GM12878 (cell line): ENCODE measurements at regions of chr13 and their contacts with region 1.

Region 1: DNA sequence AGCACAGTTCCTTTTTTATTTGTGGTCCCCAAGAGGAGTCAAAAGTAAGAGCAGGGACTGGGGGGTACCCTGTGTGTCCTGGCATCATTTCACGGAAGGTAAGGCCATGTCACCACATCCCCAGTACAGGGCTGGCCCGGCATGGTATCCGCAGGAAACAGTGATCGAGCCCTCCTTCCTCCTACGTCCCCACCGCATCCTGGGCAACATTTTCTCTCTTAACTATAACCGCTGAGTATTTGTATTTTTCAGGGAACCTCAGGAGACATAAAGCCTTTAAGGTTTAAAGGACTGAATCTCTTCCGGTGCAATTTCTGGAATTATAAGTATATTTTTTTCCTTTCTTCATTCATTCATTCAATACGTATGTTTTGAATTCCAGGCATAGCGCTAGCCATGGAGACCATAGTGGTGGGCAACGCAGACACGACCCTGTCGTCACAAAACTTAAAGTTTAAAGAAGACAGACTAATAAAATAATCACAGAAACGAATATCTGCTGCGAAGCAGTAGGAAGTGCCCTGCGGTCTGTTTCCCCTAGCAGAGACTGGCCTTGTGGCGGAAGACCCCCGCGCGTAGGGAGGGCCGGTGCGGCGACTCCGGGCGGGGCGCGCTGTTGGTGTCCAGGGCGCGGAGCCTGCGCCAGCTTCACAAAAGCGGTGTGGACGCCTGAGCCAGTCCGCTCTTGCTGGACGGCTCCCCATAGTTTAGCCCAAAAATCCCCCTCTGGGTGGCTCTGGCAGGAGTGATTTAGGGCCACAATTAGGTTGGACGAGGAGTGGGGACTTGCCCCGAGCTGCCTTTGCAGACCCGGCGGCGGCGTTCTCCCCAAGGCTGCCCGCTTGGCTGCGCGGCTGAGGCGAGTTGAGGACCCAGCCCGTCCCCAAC is 13.9 kb upstream of the LATS2 start:
- DNase-seq: no peak
- ATAC-seq: peak; percentile 83
- H3K4me3 ChIP-seq: peak overlapping the region; percentile 44; the same call in 1 of the 2 replicates
- H3K27ac ChIP-seq: no peak overlapping the region
- H3K4me1 ChIP-seq: peaks cover 6% of the 10 kb centered on the region
- H3K27me3 ChIP-seq: no peaks in the 10 kb centered on the region; a peak in 1 of 4 replicates
- CTCF ChIP-seq: no peak
- EP300 ChIP-seq: no peak
- POLR2A ChIP-seq: no peak
- RAD21 ChIP-seq: no peak

Region 2: GRCh38 chr13:20945952-20946383 is 129.3 kb before region 1 on chr13:
- CTCF ChIA-PET with region 1: no interaction called
- POLR2A ChIA-PET with region 1: no interaction called
- RAD21 ChIA-PET with region 1: no interaction called
- SMC1A ChIA-PET with region 1: no interaction called
- in situ Hi-C with region 1: no loop called
- intact Hi-C with region 1: loop called (anchors 10 kb)
- DNase-seq: no peak
- ATAC-seq: peak; percentile 45
- H3K4me3 ChIP-seq: no peak overlapping the region
- H3K27ac ChIP-seq: no peak overlapping the region
- H3K4me1 ChIP-seq: no peaks in the 10 kb centered on the region
- H3K27me3 ChIP-seq: no peaks in the 10 kb centered on the region
- CTCF ChIP-seq: no peak
- EP300 ChIP-seq: no peak
- POLR2A ChIP-seq: no peak
- RAD21 ChIP-seq: no peak